ENCODE measurements at regions of chr6 and their contacts with region 1.

Region 1: GRCh38 chr6:121849477-121849876 is 414.0 kb downstream of the GJA1 start:
- DNase-seq: peak; percentile 48
- ATAC-seq: peak; percentile 89 to 94

Region 2: GRCh38 chr6:121430514-121431460 is 418.7 kb before region 1 on chr6:
- intact Hi-C with region 1: loop called (anchors 2 to 10 kb)
- DNase-seq: no peak
- ATAC-seq: peak; percentile 21 to 38

Region 3: GRCh38 chr6:121666814-121667213 is 182.7 kb before region 1 on chr6:
- intact Hi-C with region 1: loop called in 1 of 2 experiments (anchors 10 kb)
- DNase-seq: no peak
- ATAC-seq: peak; percentile 93 to 98

Region 4: GRCh38 chr6:122033539-122034181 is 184.2 kb after region 1 on chr6:
- intact Hi-C with region 1: loop called in 1 of 2 experiments (anchors 5 kb)
- DNase-seq: no peak
- ATAC-seq: peak; percentile 84 to 89

Region 5: GRCh38 chr6:122222761-122223160 is 373.3 kb after region 1 on chr6:
- intact Hi-C with region 1: no loop called
- DNase-seq: no peak
- ATAC-seq: peak in 1 of 2 donors; percentile 84

Region 6: DNA sequence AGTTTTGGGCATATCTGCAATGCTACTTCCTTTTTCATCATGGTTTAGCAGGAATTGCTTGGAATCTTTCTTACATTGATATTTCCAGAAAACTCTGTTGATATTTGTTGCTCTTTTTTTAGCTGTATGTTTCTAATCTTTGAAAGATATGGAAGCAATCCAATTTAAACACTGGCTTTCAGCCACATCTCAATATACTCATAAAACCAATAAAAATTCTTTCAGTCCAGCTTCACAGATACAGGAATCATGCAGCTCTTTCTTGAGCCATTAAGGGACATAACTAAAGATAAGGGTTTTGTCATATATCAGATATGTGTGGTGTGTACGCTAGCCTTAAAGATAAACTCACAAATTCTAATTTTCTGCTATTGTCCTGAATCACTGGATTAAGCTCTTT is 808.1 kb after region 1 on chr6:
- intact Hi-C with region 1: no loop called
- DNase-seq: no peak
- ATAC-seq: no peak

Measured in left cardiac atrium (tissue), 4 donors.